MCF 10A (cell line): ENCODE measurements at regions of chr19 and their contacts with region 1.

Region 1: GRCh38 chr19:45001087-45001739 is at the start of gene RELB:
- DNase-seq: peak; percentile 95
- H3K4me3 Mint-ChIP-seq: peak within 1 kb of the TSS; percentile 86
- H3K27ac Mint-ChIP-seq: peak within 1 kb of the TSS; percentile 94
- H3K4me1 Mint-ChIP-seq: peaks cover 8% of the 10 kb centered on the region
- H3K27me3 Mint-ChIP-seq: no peaks in the 10 kb centered on the region
- CTCF ChIP-seq: no peak
- total RNA-seq, gene RELB: 27.0 and 39.8 TPM in 2 replicates

Region 2: DNA sequence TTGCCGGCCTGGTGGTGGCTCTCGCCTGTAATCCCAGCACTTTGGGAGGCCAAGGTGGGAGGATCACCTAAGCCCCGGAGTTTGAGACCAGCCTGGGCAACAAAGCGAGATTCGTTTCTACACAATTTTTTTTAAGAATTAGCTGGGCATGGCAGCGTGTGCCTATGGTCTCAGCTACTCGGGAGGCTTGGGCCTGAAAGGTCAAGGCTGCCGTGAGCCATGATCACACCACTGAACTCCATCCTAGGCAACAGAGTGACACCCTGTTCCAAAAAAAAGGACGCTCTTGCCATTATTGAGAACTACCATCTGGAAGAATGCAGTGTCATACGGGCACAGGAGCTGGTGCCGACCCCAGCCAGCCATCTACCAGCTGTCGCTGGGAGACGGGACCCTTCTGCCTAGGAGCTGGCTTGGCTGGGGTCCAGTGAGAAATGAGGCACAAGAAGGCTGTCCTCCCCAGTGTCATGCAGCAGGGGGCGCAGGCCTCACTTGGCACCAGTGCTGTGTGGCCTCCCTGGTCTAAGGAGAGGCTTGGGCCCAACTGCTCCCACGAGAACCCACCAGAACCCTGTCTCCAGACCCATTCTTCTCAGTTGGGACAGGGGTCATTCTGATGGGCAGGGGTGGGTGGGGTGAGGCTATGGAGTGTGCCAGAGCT is 12.2 kb before region 1 on chr19:
- CTCF ChIA-PET with region 1: interaction called, 15 read pairs
- POLR2A ChIA-PET with region 1: interaction called, 6 read pairs
- intact Hi-C with region 1: no loop called
- DNase-seq: peak; percentile 80
- H3K4me3 Mint-ChIP-seq: no peak overlapping the region
- H3K27ac Mint-ChIP-seq: no peak overlapping the region
- H3K4me1 Mint-ChIP-seq: no peaks in the 10 kb centered on the region
- H3K27me3 Mint-ChIP-seq: no peaks in the 10 kb centered on the region
- CTCF ChIP-seq: peak; percentile 60